Activated CD4-positive, alpha-beta T cell treated with anti-CD3 and anti-CD28 coated beads, Interleukin-2, amount 10 ng/mL, durations not matched to agents 24 days and 14 days (primary cell): ENCODE measurements at regions of chr2 and their contacts with region 1.

Region 1: DNA sequence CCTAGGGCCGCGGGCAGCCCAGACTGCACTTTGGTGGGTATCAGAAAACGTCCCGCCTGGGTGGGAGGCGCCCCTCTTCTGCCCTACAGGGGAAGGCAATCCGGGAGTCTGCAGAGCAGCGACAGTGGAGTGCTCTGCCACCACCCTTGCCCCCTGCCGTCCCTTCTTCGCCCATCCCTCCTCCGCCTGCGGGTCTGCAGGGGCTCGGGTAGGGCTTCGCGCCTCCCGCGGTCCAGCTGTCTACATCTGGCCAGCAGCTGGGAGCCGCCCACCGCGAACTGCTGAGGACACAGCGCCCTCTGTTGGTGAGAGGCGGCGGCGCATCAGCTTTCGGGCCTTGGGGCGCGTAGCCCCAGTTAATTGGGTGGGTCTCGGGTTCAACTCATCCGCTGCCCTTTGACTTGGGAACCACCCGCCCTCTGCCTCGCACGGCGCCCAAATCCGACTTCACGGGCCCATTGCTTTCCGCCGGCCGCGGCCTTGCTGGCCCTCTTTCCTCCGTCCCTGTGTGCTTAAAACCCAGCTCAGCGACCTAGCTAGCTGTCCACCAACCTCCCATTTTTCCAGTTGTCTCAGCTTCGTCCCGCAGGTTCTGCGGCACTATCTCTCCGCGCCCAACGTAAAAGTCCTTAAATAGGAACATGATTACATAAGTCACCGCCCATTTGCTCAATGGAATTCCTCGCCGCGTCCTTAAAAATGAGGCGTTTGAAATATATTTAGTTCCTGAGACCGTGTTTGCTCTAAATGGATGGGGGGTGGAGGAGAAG is 17.6 kb downstream of the WNT10A start:
- DNase-seq: peak; percentile 94
- H3K4me3 Mint-ChIP-seq: peak overlapping the region; percentile 76
- H3K27ac Mint-ChIP-seq: peak overlapping the region; percentile 83
- H3K4me1 Mint-ChIP-seq: peaks cover 42% of the 10 kb centered on the region
- H3K27me3 Mint-ChIP-seq: peaks cover 61% of the 10 kb centered on the region

Region 2: DNA sequence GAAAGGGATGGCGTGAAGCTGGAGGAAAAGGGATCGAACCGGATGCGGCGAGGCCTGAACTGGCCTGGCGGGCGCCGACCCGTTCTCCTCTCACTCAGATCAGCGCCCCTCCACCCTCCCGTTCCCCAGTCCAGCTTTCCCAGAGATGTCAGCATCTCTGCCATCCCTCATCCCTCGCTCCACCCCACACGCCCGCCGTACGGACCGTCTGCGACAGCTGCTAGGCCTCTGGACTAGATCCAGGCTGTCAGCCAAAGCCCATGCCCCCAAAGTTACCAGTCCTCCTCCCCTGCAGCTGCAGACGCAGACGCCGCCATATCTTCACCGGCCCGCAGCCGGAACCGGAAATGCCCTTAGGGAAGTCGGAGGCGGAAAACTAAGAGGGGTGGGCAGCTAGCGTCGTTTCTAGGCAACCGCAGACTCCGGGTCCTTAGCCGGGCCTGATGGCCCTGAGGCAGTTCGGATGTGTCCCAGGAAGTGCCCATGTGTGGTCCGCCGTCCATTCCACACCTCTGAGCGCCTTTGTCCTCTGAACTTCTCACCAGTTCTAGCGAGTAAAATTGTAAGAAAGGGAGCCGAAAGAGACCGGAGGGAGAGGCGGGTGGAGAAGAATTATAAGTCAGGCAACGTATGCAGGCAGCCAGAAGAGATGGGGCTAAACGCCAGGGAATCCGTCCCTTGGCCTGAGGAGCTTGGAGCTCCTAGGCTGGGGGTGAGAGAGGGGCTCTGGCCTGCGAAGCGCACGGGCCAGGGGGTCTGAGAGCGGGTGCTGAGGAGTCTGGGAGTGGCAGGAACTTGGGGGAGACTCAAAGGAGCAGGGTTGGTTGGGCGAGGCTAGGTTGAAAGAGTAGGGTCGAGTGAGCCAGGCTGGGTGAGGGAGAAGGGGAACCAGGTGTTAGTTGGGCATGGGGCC is 226.4 kb before region 1 on chr2 and contains the starts of genes RNF25 and STK36:
- intact Hi-C with region 1: loop called (anchors 5 kb)
- DNase-seq: peak; percentile 95
- H3K4me3 Mint-ChIP-seq: peak within 1 kb of the TSS; percentile 97
- H3K27ac Mint-ChIP-seq: peak within 1 kb of the TSS; percentile 94
- H3K4me1 Mint-ChIP-seq: peaks cover 22% of the 10 kb centered on the region
- H3K27me3 Mint-ChIP-seq: no peaks in the 10 kb centered on the region
- total RNA-seq, gene RNF25: 23.6 and 28.8 TPM in 2 replicates
- total RNA-seq, gene STK36: 20.2 and 21.3 TPM in 2 replicates

Region 3: GRCh38 chr2:218733171-218734021 is 164.9 kb before region 1 on chr2:
- intact Hi-C with region 1: loop called (anchors 5 kb)
- DNase-seq: peak; percentile 83
- H3K4me3 Mint-ChIP-seq: peak overlapping the region; percentile 32
- H3K27ac Mint-ChIP-seq: peak overlapping the region; percentile 80
- H3K4me1 Mint-ChIP-seq: peaks cover 34% of the 10 kb centered on the region
- H3K27me3 Mint-ChIP-seq: no peaks in the 10 kb centered on the region

Region 4: GRCh38 chr2:218876562-218877219 is 21.6 kb before region 1 on chr2:
- intact Hi-C with region 1: loop called (anchors 1 kb)
- DNase-seq: peak; percentile 92
- H3K4me3 Mint-ChIP-seq: no peak overlapping the region
- H3K27ac Mint-ChIP-seq: no peak overlapping the region
- H3K4me1 Mint-ChIP-seq: peaks cover 29% of the 10 kb centered on the region
- H3K27me3 Mint-ChIP-seq: peaks cover 71% of the 10 kb centered on the region

Region 5: DNA sequence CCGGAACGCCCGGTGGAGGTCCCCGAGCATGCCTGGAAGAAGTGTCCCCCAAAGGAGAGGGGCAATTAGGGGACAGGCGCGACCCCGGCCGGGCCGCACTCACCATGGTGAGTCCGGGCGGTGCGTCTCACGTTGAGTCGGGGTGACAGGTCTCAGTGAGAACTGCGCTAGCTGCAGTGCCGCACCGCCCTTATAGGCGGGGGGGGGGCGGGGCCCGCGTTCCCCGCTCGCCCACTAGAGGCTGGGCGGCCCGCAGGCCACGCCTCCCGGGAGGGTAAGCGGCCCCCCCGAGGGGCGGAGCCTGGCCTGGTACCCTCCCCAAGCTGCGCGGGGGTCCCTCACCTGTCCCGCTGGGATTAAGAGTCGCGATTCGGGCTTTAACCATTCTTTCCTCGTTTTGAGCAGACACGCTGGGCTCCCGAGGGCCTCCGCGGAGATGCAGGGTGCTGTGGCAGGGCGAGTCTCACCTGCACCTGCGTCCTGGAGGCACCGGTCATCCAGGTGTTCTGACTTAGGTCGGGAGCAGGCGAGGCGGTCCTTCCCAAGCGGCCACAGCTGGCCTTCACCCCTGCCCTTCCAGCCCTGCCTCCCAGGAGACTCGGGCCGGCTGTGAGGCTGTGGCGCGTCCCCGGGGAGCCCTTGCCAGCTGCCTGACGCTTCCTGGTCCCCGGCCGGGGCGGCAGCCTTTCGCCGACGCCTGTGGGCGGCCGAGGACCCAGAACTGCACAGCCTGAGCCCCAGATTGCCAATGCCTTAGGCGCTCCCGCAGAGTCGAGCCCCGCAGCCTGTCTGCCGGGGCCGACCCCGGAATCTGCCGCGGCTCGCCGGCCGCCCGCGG is 355.7 kb after region 1 on chr2 and contains the start of gene TUBA4A:
- intact Hi-C with region 1: loop called (anchors 2 kb)
- DNase-seq: peak; percentile 97
- H3K4me3 Mint-ChIP-seq: peak within 1 kb of the TSS; percentile 80
- H3K27ac Mint-ChIP-seq: peak within 1 kb of the TSS; percentile 91
- H3K4me1 Mint-ChIP-seq: peaks cover 47% of the 10 kb centered on the region
- H3K27me3 Mint-ChIP-seq: no peaks in the 10 kb centered on the region
- total RNA-seq, gene TUBA4A: 235 and 240 TPM in 2 replicates

Region 6: GRCh38 chr2:219498280-219499057 is 600.2 kb after region 1 on chr2 and contains the start of gene GMPPA:
- intact Hi-C with region 1: loop called (anchors 5 kb)
- DNase-seq: peak; percentile 99
- H3K4me3 Mint-ChIP-seq: peak within 1 kb of the TSS; percentile 97
- H3K27ac Mint-ChIP-seq: peak within 1 kb of the TSS; percentile 83
- H3K4me1 Mint-ChIP-seq: peaks cover 26% of the 10 kb centered on the region
- H3K27me3 Mint-ChIP-seq: peaks cover 39% of the 10 kb centered on the region
- total RNA-seq, gene GMPPA: 45.5 and 46.0 TPM in 2 replicates